H1 (cell line): ENCODE measurements at regions of chr20 and their contacts with region 1.

Region 1: GRCh38 chr20:3218307-3218988 is 9.2 kb downstream of the ITPA start:
- DNase-seq: peak in 1 of 2 experiments; percentile 98
- H3K4me3 ChIP-seq: no peak overlapping the region
- H3K27ac ChIP-seq: no peak overlapping the region
- H3K4me1 ChIP-seq: peaks cover 0 to 2% (median 0%) of the 10 kb centered on the region in 4 experiments; a peak in 2 of 7 replicates
- H3K27me3 ChIP-seq: no peaks in the 10 kb centered on the region
- CTCF ChIP-seq: peak; percentile 86 to 90 (median 89)
- EP300 ChIP-seq: peak in 1 of 2 experiments; percentile 19; a peak in 1 of 3 replicates
- POLR2A ChIP-seq: no peak
- RAD21 ChIP-seq: peak; percentile 72 to 88

Region 2: GRCh38 chr20:3146732-3147341 is 71.6 kb before region 1 on chr20:
- CTCF ChIA-PET with region 1: no interaction called
- POLR2A ChIA-PET with region 1: no interaction called
- DNase-seq: no peak
- H3K4me3 ChIP-seq: no peak overlapping the region
- H3K27ac ChIP-seq: no peak overlapping the region
- H3K4me1 ChIP-seq: no peaks in the 10 kb centered on the region
- H3K27me3 ChIP-seq: no peaks in the 10 kb centered on the region
- CTCF ChIP-seq: no peak
- EP300 ChIP-seq: no peak
- POLR2A ChIP-seq: no peak
- RAD21 ChIP-seq: no peak

Region 3: DNA sequence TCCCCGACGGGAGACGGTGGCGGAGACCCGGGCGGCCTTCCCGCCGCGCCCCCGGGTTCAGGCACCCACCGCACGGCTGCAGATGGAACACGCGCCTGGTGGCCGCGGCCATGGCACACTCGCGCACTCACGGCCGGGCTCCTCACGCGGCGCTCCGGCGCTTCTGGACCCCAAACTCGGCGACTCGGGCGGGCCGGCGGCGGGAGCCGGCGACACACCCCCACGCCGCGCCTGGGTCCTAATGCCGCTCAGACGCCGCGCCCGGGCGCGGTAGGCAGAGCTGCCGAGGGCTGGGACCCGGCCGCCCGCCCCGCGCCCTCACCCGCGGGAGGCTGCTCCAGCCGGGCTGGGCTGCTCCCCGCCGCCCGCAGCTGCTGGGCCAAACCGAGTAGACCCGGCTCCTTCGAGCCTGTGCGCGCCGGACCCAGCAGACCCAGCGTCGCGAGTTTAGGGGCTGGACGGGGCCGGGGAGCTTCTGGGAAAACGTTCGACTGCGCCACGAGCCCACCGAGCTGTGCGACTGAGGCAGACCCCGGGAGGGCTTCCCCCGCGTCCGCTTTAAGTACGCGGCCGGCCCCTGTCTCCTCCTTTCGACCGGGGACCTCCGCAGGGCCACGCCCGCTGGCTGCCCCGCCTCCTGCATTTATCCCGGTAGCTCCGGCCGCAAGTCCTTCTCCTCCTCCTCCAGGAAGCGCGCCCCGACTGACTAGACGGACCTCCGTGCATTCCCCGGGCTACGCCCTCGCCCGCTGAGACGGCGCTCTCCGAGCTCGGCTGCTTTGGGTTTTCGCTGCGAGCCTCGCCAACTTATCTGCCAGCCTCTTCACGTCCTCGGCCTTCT is 20.8 kb after region 1 on chr20 and contains the start of gene SLC4A11:
- CTCF ChIA-PET with region 1: interaction called, 14 read pairs
- POLR2A ChIA-PET with region 1: interaction called, 61 read pairs
- DNase-seq: peak; percentile 67 to 84
- H3K4me3 ChIP-seq: peak within 1 kb of the TSS; percentile 47 to 79 (median 76)
- H3K27ac ChIP-seq: no peak within 1 kb of the TSS
- H3K4me1 ChIP-seq: peaks cover 0 to 19% (median 7%) of the 10 kb centered on the region in 4 experiments; a peak in 6 of 7 replicates
- H3K27me3 ChIP-seq: peaks cover 13 to 40% (median 35%) of the 10 kb centered on the region in 4 experiments
- CTCF ChIP-seq: no peak
- EP300 ChIP-seq: no peak
- POLR2A ChIP-seq: peak in 1 of 2 experiments; percentile 30; a peak in 1 of 3 replicates
- RAD21 ChIP-seq: no peak
- total RNA-seq, gene SLC4A11: 29.1 and 32.3 TPM in 2 replicates

Region 4: GRCh38 chr20:3262566-3262965 is 44.1 kb after region 1 on chr20:
- CTCF ChIA-PET with region 1: interaction called, 11 read pairs
- POLR2A ChIA-PET with region 1: no interaction called
- DNase-seq: no peak
- H3K4me3 ChIP-seq: no peak overlapping the region
- H3K27ac ChIP-seq: no peak overlapping the region
- H3K4me1 ChIP-seq: no peaks in the 10 kb centered on the region
- H3K27me3 ChIP-seq: no peaks in the 10 kb centered on the region
- CTCF ChIP-seq: no peak
- EP300 ChIP-seq: no peak
- POLR2A ChIP-seq: no peak
- RAD21 ChIP-seq: no peak

Region 5: GRCh38 chr20:3276680-3277015 is 58.2 kb after region 1 on chr20:
- CTCF ChIA-PET with region 1: interaction called, 33 read pairs
- POLR2A ChIA-PET with region 1: no interaction called
- DNase-seq: no peak
- H3K4me3 ChIP-seq: no peak overlapping the region
- H3K27ac ChIP-seq: no peak overlapping the region
- H3K4me1 ChIP-seq: no peaks in the 10 kb centered on the region
- H3K27me3 ChIP-seq: no peaks in the 10 kb centered on the region
- CTCF ChIP-seq: peak; percentile 33 to 74 (median 67)
- EP300 ChIP-seq: no peak
- POLR2A ChIP-seq: no peak
- RAD21 ChIP-seq: peak; percentile 66 to 80

Region 6: DNA sequence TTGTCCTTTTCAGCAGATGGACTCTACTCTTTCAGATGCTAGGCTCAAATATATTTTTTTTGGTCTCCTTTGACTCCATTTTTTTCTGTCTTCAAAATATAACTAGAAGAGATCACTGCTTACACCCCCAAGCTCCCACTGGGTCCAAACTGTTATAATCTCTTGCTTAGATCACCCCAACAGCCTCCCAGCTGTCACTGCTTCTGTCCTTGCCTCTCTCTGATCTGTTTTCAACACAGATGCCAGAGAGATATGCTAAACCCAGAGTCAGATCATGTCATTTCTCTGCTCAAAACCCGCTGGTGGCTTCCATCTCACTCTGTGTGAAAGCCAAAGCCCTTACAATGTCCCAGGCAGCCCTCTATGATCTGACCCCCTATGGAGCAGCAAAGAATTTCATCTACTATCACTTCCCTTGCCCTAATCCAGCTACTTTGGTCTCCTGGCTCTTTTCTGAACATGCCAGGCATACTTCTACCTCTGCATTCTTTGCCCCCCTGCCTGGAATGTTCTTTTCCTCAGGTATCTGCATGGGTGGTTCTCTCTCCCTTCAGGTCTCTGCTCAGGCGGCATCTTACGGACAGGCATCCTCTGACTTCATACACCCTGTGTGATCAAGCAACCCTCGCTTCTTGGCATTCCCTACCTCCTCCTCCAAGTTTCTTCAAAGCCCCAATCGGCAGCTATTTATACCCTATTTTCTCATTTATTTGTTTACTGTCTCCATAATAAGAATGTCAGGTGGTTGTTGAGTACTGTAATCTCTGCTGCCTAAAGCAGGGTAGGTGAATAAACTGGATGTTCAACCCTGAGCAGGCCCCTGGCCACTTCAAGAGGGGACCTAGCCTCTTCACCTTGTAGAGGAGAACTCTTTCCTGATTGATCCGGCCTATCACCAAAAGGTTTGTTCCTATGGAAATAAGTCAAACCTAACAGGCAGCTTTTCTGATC is 64.1 kb after region 1 on chr20:
- CTCF ChIA-PET with region 1: interaction called, 33 read pairs
- POLR2A ChIA-PET with region 1: no interaction called
- DNase-seq: peak in 1 of 2 experiments; percentile 10
- H3K4me3 ChIP-seq: no peak overlapping the region
- H3K27ac ChIP-seq: no peak overlapping the region; the same call in 1 of the 2 replicates
- H3K4me1 ChIP-seq: peaks cover 0 to 8% (median 5%) of the 10 kb centered on the region in 4 experiments; a peak in 1 of 7 replicates
- H3K27me3 ChIP-seq: no peaks in the 10 kb centered on the region
- CTCF ChIP-seq: no peak
- EP300 ChIP-seq: no peak
- POLR2A ChIP-seq: no peak
- RAD21 ChIP-seq: no peak

Region 7: DNA sequence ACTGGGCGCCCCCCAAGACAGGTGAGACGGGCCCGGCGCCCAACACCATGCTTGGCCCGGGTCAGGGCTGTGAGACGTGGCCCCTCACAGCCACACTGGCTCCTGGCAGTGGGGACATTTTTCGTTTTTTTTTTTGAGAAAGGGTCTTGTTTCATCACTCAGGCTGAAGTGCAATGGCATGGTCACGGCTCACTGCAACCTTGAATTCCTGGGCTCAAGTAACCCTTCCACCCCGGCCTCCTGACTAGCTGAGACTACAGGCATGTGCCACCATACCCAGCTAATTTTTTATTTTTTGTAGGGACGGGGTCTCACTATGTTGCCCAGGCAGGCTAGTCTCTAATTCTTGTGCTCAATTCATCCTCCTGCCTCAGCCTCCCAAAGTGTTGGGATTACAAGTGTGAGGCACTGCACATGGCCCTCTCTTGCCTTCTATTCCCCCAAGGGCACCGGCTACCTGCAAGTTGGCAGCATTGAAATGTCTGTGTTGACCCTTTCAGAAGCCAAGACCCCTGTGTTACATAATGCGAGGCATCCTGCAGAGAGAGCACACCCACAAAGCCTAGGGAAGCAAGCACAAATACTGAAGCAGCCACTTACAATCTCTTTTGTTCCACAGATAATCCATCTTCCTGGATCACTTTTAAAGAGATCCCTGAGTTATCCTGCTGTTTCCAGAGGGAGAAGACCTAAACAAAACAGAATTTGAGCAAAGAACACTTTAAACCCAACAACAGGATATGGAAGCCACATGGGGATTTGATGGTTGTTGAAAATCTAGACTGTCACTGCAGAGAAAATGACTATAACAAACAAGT is 78.0 kb after region 1 on chr20:
- CTCF ChIA-PET with region 1: no interaction called
- POLR2A ChIA-PET with region 1: no interaction called
- DNase-seq: no peak
- H3K4me3 ChIP-seq: no peak overlapping the region
- H3K27ac ChIP-seq: no peak overlapping the region
- H3K4me1 ChIP-seq: no peaks in the 10 kb centered on the region
- H3K27me3 ChIP-seq: no peaks in the 10 kb centered on the region
- CTCF ChIP-seq: no peak
- EP300 ChIP-seq: no peak
- POLR2A ChIP-seq: no peak
- RAD21 ChIP-seq: no peak

Region 8: DNA sequence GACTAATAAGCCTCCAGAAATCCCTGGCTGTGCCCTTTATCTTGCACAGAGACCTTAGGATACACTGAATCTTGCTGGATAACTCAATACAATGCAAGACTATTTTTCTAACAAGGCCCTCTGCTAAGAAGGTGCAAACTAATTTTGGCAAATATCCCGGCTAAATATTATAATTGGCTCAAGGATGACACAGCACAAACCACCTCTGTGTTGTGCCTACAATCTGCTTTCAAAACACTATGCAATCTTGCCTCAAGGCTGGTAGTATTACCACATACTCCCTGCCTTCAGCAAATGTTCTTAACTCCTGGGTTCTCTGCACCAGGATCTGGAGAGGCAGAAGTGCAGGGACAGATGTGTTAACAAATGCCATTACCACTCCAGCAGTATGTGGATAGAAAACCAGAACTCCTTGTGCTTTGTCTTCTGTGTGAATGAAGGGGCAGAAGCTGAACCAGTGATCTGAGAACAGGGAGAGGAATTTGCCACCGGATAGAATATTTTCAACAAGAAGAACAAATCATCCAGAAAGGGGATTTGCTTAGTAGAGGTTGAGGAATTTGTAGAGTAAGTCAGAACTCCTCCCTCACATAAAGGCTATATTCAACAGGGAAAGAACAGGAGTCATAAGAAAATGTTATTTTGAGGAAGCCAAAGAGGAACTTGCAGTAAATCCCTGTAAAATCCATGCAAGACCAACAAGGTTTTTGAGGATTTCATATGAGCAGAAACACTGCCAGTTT is 94.7 kb after region 1 on chr20:
- CTCF ChIA-PET with region 1: interaction called, 14 read pairs
- POLR2A ChIA-PET with region 1: no interaction called
- DNase-seq: no peak
- H3K4me3 ChIP-seq: no peak overlapping the region
- H3K27ac ChIP-seq: no peak overlapping the region
- H3K4me1 ChIP-seq: no peaks in the 10 kb centered on the region; a peak in 1 of 7 replicates
- H3K27me3 ChIP-seq: no peaks in the 10 kb centered on the region
- CTCF ChIP-seq: no peak
- EP300 ChIP-seq: no peak
- POLR2A ChIP-seq: no peak
- RAD21 ChIP-seq: no peak

Region 9: DNA sequence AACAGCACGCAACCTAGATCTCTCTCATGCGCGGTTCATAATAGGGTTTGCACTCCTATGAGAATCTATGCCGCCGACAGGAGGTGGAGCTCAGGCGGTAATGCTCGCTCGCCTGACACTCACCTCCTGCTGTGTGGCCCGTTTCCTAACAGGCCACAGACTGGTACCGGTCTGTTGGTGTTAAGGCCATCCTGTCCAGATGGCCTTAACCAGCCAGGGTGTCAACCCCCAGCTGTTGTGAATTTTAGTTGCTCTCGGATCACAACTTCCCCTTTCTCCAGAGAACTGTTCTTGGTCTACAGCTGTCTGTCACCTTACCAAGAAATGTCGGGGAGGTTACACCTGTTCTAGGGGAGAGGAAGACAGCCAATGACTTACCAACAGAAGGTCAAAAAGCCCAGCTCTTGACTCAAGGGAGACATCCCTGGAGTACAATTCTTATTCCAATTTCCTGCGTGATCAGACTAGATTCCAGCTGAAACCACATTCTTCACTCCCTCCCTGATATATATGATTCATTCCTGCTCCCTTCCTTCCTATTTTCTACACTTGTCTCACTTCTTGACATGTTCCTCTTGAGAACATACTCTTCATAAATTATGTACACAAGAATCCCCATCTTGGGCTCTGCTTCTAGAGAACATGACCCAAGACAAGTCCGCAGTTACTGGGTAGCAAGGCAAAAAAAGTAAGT is 212.1 kb after region 1 on chr20:
- CTCF ChIA-PET with region 1: no interaction called
- POLR2A ChIA-PET with region 1: no interaction called
- DNase-seq: no peak
- H3K4me3 ChIP-seq: no peak overlapping the region
- H3K27ac ChIP-seq: no peak overlapping the region
- H3K4me1 ChIP-seq: peaks cover 0 to 3% (median 1%) of the 10 kb centered on the region in 4 experiments; a peak in 2 of 7 replicates
- H3K27me3 ChIP-seq: no peaks in the 10 kb centered on the region
- CTCF ChIP-seq: no peak
- EP300 ChIP-seq: no peak
- POLR2A ChIP-seq: no peak
- RAD21 ChIP-seq: no peak